ENCODE measurements at regions of chr19 and their contacts with region 1.

Region 1: GRCh38 chr19:18058208-18059030 is 28.3 kb downstream of the IL12RB1 start:
- DNase-seq: no peak
- H3K4me3 ChIP-seq: no peak overlapping the region
- H3K27me3 ChIP-seq: no peaks in the 10 kb centered on the region; the same call in 1 of the 2 replicates
- CTCF ChIP-seq: peak; percentile 90

Region 2: GRCh38 chr19:18000935-18001778 is 57.3 kb before region 1 on chr19:
- CTCF ChIA-PET with region 1: interaction called, 120 read pairs
- POLR2A ChIA-PET with region 1: no interaction called
- DNase-seq: peak; percentile 42
- H3K4me3 ChIP-seq: peak overlapping the region; percentile 87
- H3K27me3 ChIP-seq: no peaks in the 10 kb centered on the region
- CTCF ChIP-seq: no peak

Region 3: GRCh38 chr19:18203863-18204393 is 145.5 kb after region 1 on chr19 and contains the start of gene RAB3A:
- CTCF ChIA-PET with region 1: no interaction called
- POLR2A ChIA-PET with region 1: no interaction called
- DNase-seq: peak; percentile 100
- H3K4me3 ChIP-seq: peak within 1 kb of the TSS; percentile 64
- H3K27me3 ChIP-seq: no peaks in the 10 kb centered on the region
- CTCF ChIP-seq: no peak
- polyA plus RNA-seq, gene RAB3A: 1.4 and 2.0 TPM in 2 replicates